ENCODE measurements at regions of chr3 and their contacts with region 1.

Region 1: DNA sequence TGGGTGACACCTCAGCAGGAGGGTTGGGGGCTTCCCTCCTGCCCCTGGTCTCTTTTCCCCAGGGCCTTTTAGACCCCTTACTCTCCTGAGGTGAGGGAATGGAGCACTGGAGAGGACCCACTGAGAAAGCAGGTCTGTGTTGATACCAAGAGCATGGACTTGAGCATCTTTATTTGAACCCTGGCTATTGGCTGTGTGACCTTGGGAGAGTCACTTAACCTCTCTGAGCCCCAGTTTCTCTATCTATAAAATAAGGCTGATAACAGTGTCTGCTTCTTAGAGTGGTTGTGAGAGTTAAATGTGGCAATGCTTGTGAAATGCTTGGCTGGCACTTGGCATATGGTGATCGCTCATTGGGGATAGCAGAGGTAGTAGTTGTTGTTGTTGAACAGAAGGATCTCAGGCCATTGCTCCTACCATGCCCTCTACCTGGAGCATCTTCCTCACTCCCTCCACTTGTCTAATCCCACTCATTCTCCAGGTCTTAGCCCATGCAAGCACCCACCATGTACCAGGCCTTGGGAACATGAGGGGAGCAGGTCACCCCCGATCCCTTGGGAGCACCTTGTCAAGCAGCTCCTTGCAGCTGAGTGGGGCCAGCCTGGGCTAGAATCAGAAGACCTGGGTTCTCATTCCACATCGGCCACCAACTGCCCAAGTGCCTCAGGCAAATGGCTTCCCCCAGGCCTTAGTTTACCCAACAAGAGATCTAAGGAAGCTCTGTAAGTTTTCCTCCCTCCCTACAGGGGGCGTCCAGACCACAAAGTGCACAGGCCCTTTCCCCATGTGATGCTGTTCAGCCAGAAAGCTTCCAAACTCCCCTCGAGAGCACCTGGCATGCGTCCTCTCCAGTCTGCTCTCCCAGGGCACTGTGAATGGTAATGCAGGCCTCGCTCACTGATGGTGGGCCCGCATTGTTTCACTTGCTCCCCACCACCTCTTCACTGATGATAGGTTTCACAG is 96.7 kb downstream of the LSM3 start:
- DNase-seq: peak in 2 of 3 donors; percentile 31 to 40
- H3K4me3 ChIP-seq: no peak overlapping the region
- H3K27ac ChIP-seq: no peak overlapping the region
- H3K4me1 ChIP-seq: peaks cover 0 to 23% (median 10%) of the 10 kb centered on the region in 4 experiments
- H3K27me3 ChIP-seq: no peaks in the 10 kb centered on the region

Region 2: DNA sequence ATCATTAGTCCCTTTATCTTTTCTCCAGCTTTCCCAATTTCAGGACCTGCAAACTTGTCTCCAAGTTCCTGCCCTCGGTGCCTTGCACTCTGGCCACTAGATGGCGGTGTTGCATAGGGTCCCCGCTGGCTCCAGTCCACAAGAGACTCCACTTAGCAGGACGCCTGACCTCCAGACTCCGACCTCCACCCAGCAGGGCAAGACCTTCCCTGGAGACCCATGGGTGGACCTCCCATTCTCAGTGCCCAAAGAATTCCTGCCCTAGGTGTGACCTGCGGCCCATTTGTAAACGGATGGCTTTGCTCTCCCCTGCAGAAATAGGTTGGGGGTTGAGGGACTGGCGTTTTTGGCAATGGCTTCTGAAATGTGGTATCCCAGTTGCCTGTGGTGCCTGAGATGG is 14.1 kb before region 1 on chr3:
- CTCF ChIA-PET with region 1: interaction called, 18 read pairs
- POLR2A ChIA-PET with region 1: no interaction called
- DNase-seq: peak; percentile 59 to 68 (median 65)
- H3K4me3 ChIP-seq: no peak overlapping the region
- H3K27ac ChIP-seq: no peak overlapping the region
- H3K4me1 ChIP-seq: peaks cover 0 to 4% (median 2%) of the 10 kb centered on the region in 4 experiments
- H3K27me3 ChIP-seq: peaks cover 0 to 2% (median 0%) of the 10 kb centered on the region in 5 experiments

Region 3: GRCh38 chr3:14297784-14298236 is 22.5 kb after region 1 on chr3:
- CTCF ChIA-PET with region 1: no interaction called
- POLR2A ChIA-PET with region 1: no interaction called
- DNase-seq: peak in 2 of 3 donors; percentile 15 to 36
- H3K4me3 ChIP-seq: no peak overlapping the region
- H3K27ac ChIP-seq: no peak overlapping the region
- H3K4me1 ChIP-seq: peaks cover 0 to 6% (median under 1%) of the 10 kb centered on the region in 4 experiments
- H3K27me3 ChIP-seq: peaks cover 0 to 5% (median 3%) of the 10 kb centered on the region in 5 experiments